ENCODE measurements at regions of chr17 and their contacts with region 1.

Region 1: GRCh38 chr17:17125136-17126084 is 80.7 kb downstream of the PLD6 start:
- DNase-seq: peak in 1 of 2 donors; percentile 72
- ATAC-seq: peak; percentile 63 to 76 (median 74)
- H3K4me3 ChIP-seq: peak overlapping the region; percentile 19
- H3K4me3 Mint-ChIP-seq: peak overlapping the region; percentile 91
- H3K27ac ChIP-seq: peak overlapping the region; percentile 83
- H3K27ac Mint-ChIP-seq: peak overlapping the region; percentile 93 to 96
- H3K4me1 ChIP-seq: peaks cover 86% of the 10 kb centered on the region
- H3K4me1 Mint-ChIP-seq: peaks cover 84 to 89% of the 10 kb centered on the region in 2 donors
- H3K27me3 ChIP-seq: no peaks in the 10 kb centered on the region
- H3K27me3 Mint-ChIP-seq: no peaks in the 10 kb centered on the region
- CTCF ChIP-seq: no peak

Region 2: GRCh38 chr17:17001874-17002520 is 123.4 kb before region 1 on chr17:
- intact Hi-C with region 1: no loop called
- DNase-seq: peak; percentile 75 to 86
- ATAC-seq: peak; percentile 81 to 100 (median 99)
- H3K4me3 ChIP-seq: no peak overlapping the region
- H3K4me3 Mint-ChIP-seq: no peak overlapping the region
- H3K27ac ChIP-seq: no peak overlapping the region
- H3K27ac Mint-ChIP-seq: no peak overlapping the region
- H3K4me1 ChIP-seq: peaks cover 8% of the 10 kb centered on the region
- H3K4me1 Mint-ChIP-seq: peaks cover 0 to 5% of the 10 kb centered on the region in 2 donors
- H3K27me3 ChIP-seq: no peaks in the 10 kb centered on the region
- H3K27me3 Mint-ChIP-seq: peaks cover 0 to 2% of the 10 kb centered on the region in 2 donors
- CTCF ChIP-seq: peak; percentile 97

Region 3: GRCh38 chr17:17041571-17042380 is 83.6 kb before region 1 on chr17:
- intact Hi-C with region 1: loop called (anchors 5 kb)
- DNase-seq: peak; percentile 95 to 97
- ATAC-seq: peak; percentile 95 to 99 (median 97)
- H3K4me3 ChIP-seq: peak overlapping the region; percentile 30
- H3K4me3 Mint-ChIP-seq: peak overlapping the region; percentile 81
- H3K27ac ChIP-seq: no peak overlapping the region
- H3K27ac Mint-ChIP-seq: peak overlapping the region in 1 of 2 donors; percentile 73
- H3K4me1 ChIP-seq: peaks cover 36% of the 10 kb centered on the region
- H3K4me1 Mint-ChIP-seq: peaks cover 46 to 47% of the 10 kb centered on the region in 2 donors
- H3K27me3 ChIP-seq: no peaks in the 10 kb centered on the region
- H3K27me3 Mint-ChIP-seq: no peaks in the 10 kb centered on the region
- CTCF ChIP-seq: no peak

Region 4: GRCh38 chr17:17108451-17109049 is 16.9 kb before region 1 on chr17:
- intact Hi-C with region 1: loop called (anchors 1 kb)
- DNase-seq: no peak
- ATAC-seq: no peak
- H3K4me3 ChIP-seq: no peak overlapping the region
- H3K4me3 Mint-ChIP-seq: no peak overlapping the region
- H3K27ac ChIP-seq: peak overlapping the region; percentile 73
- H3K27ac Mint-ChIP-seq: peak overlapping the region; percentile 84 to 95
- H3K4me1 ChIP-seq: peaks cover 53% of the 10 kb centered on the region
- H3K4me1 Mint-ChIP-seq: peaks cover 47 to 76% of the 10 kb centered on the region in 2 donors
- H3K27me3 ChIP-seq: no peaks in the 10 kb centered on the region
- H3K27me3 Mint-ChIP-seq: no peaks in the 10 kb centered on the region
- CTCF ChIP-seq: no peak

Region 5: GRCh38 chr17:17303010-17303846 is 177.8 kb after region 1 on chr17 and contains the start of gene NT5M:
- intact Hi-C with region 1: loop called (anchors 10 kb)
- DNase-seq: peak; percentile 74 to 80
- ATAC-seq: peak; percentile 50 to 75 (median 66)
- H3K4me3 ChIP-seq: peak within 1 kb of the TSS; percentile 45
- H3K4me3 Mint-ChIP-seq: peak within 1 kb of the TSS; percentile 88
- H3K27ac ChIP-seq: peak within 1 kb of the TSS; percentile 65
- H3K27ac Mint-ChIP-seq: peak within 1 kb of the TSS; percentile 79 to 93
- H3K4me1 ChIP-seq: peaks cover 41% of the 10 kb centered on the region
- H3K4me1 Mint-ChIP-seq: peaks cover 31 to 36% of the 10 kb centered on the region in 2 donors
- H3K27me3 ChIP-seq: no peaks in the 10 kb centered on the region
- H3K27me3 Mint-ChIP-seq: peaks cover 5% of the 10 kb centered on the region in 2 donors
- CTCF ChIP-seq: no peak
- total RNA-seq, gene NT5M: 3.5 to 4.4 (median 4.1) TPM